A673 (cell line): ENCODE measurements at regions of chr5 and their contacts with region 1.

Region 1: GRCh38 chr5:92309336-92309991 is 926.3 kb upstream of the ARRDC3 start:
- DNase-seq: peak; percentile 52
- H3K4me3 ChIP-seq: no peak overlapping the region
- H3K27ac ChIP-seq: no peak overlapping the region
- H3K4me1 ChIP-seq: peaks cover 4% of the 10 kb centered on the region
- H3K27me3 ChIP-seq: no peaks in the 10 kb centered on the region
- CTCF ChIP-seq: peak; percentile 61

Region 2: GRCh38 chr5:91499943-91500531 is 809.4 kb before region 1 on chr5:
- CTCF ChIA-PET with region 1: no interaction called
- POLR2A ChIA-PET with region 1: no interaction called
- intact Hi-C with region 1: loop called (anchors 10 kb)
- DNase-seq: peak; percentile 71
- H3K4me3 ChIP-seq: no peak overlapping the region
- H3K27ac ChIP-seq: no peak overlapping the region
- H3K4me1 ChIP-seq: peaks cover 5% of the 10 kb centered on the region
- H3K27me3 ChIP-seq: no peaks in the 10 kb centered on the region
- CTCF ChIP-seq: peak; percentile 73

Region 3: DNA sequence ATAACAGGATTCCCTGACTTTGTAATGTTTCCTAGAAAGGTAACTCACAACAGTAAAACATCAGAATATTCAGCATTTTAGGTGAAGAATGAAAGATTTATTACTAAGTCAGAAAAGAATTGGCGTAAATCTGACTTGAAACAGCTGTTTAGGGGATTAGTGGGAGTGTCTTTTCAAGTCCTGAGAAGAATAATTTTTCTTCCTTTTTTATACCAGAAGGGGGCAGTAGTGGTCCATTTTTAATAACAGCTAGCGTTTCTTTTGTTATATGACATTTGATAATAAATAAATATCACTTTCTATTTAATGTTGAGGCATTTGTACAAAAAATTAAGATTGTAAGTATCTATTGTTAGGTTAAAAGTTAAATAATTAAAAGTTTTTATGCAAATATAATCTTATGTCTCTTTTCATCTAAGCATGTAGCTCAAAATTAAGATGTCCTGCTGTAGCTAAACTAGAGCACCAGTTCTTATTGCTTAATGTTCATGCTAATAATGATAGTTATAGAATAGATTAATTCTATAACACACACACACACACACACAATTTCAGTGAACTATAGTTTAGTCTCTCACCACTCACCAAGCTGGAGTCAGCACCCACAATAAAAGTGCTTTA is 667.6 kb before region 1 on chr5:
- CTCF ChIA-PET with region 1: no interaction called
- POLR2A ChIA-PET with region 1: no interaction called
- intact Hi-C with region 1: loop called (anchors 10 kb)
- DNase-seq: peak; percentile 77
- H3K4me3 ChIP-seq: no peak overlapping the region
- H3K27ac ChIP-seq: no peak overlapping the region
- H3K4me1 ChIP-seq: peaks cover 11% of the 10 kb centered on the region
- H3K27me3 ChIP-seq: no peaks in the 10 kb centered on the region
- CTCF ChIP-seq: peak; percentile 71

Region 4: DNA sequence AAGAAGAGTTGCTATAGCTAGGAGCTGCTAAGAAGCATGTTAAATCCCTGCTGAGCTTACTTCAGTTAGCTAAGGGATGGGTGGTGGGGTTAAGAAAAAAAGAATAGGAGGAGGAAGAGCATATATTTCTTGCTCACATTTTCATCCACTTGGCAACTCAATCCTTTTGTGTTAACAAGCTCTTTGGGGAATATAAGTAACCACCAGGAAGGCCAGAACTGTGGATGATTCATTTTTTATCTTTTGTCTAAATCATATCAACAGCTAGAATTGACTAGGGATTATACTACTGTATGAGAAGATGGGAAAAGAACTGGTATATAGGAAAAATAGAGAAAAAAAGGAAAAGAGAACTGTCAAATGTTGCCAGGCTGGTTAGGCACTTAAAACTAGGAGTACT is 371.0 kb before region 1 on chr5:
- CTCF ChIA-PET with region 1: no interaction called
- POLR2A ChIA-PET with region 1: no interaction called
- intact Hi-C with region 1: loop called (anchors 10 kb)
- DNase-seq: peak; percentile 19
- H3K4me3 ChIP-seq: no peak overlapping the region
- H3K27ac ChIP-seq: no peak overlapping the region
- H3K4me1 ChIP-seq: peaks cover 6% of the 10 kb centered on the region
- H3K27me3 ChIP-seq: no peaks in the 10 kb centered on the region
- CTCF ChIP-seq: no peak

Region 5: GRCh38 chr5:94111209-94112004 is 1801.9 kb after region 1 on chr5:
- CTCF ChIA-PET with region 1: no interaction called
- POLR2A ChIA-PET with region 1: interaction called, 10 read pairs
- intact Hi-C with region 1: no loop called
- DNase-seq: peak; percentile 97
- H3K4me3 ChIP-seq: peak overlapping the region; percentile 92
- H3K27ac ChIP-seq: peak overlapping the region; percentile 75
- H3K4me1 ChIP-seq: peaks cover 7% of the 10 kb centered on the region
- H3K27me3 ChIP-seq: no peaks in the 10 kb centered on the region
- CTCF ChIP-seq: no peak